GM12878 (cell line): ENCODE measurements at regions of chr15 and their contacts with region 1.

Region 1: GRCh38 chr15:48358229-48358641 is 27.0 kb downstream of the DUT start:
- DNase-seq: no peak
- ATAC-seq: peak; percentile 70
- H3K4me3 ChIP-seq: peak overlapping the region; percentile 22
- H3K27ac ChIP-seq: peak overlapping the region; percentile 53
- H3K4me1 ChIP-seq: peaks cover 10% of the 10 kb centered on the region
- H3K27me3 ChIP-seq: no peaks in the 10 kb centered on the region
- CTCF ChIP-seq: peak; percentile 44 to 73 (median 64); a peak in 5 of 6 replicates
- EP300 ChIP-seq: no peak
- POLR2A ChIP-seq: no peak
- RAD21 ChIP-seq: peak; percentile 78

Region 2: GRCh38 chr15:47961401-47962090 is 396.7 kb before region 1 on chr15:
- CTCF ChIA-PET with region 1: no interaction called
- POLR2A ChIA-PET with region 1: no interaction called
- RAD21 ChIA-PET with region 1: no interaction called
- SMC1A ChIA-PET with region 1: no interaction called
- in situ Hi-C with region 1: no loop called
- intact Hi-C with region 1: no loop called
- DNase-seq: peak; percentile 80
- ATAC-seq: peak; percentile 95
- H3K4me3 ChIP-seq: peak overlapping the region; percentile 58
- H3K27ac ChIP-seq: peak overlapping the region; percentile 51
- H3K4me1 ChIP-seq: peaks cover 21% of the 10 kb centered on the region
- H3K27me3 ChIP-seq: no peaks in the 10 kb centered on the region
- CTCF ChIP-seq: no peak
- EP300 ChIP-seq: peak; percentile 60 to 63; a peak in 2 of 4 replicates
- POLR2A ChIP-seq: no peak
- RAD21 ChIP-seq: no peak

Region 3: DNA sequence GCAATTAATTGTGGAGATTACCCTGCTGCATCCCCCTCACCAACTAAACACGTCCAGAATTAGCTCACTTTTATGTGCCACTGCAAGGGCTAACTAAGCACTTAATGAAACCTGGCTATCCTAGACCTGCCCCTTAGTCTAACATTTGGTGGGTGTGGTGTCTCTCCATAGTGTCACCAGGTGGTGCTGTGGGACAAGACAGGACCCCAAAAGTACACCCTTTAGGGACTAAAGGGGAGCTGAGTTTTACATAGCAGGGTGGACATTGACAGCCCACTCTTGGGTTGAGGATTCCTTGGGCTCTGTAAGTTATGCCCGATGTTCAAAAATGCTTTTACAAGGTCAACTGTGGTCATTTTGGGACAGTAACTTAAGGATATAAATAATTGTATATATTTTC is 21.3 kb before region 1 on chr15:
- CTCF ChIA-PET with region 1: interaction called, 123 read pairs
- POLR2A ChIA-PET with region 1: no interaction called
- RAD21 ChIA-PET with region 1: interaction called, 23 read pairs
- SMC1A ChIA-PET with region 1: interaction called, 43 read pairs
- in situ Hi-C with region 1: no loop called
- intact Hi-C with region 1: loop called (anchors 2 kb)
- DNase-seq: no peak
- ATAC-seq: peak; percentile 68
- H3K4me3 ChIP-seq: no peak overlapping the region
- H3K27ac ChIP-seq: no peak overlapping the region
- H3K4me1 ChIP-seq: peaks cover 3% of the 10 kb centered on the region; the same call in 1 of the 2 replicates
- H3K27me3 ChIP-seq: no peaks in the 10 kb centered on the region
- CTCF ChIP-seq: peak; percentile 50 to 62 (median 60); a peak in 4 of 6 replicates
- EP300 ChIP-seq: no peak
- POLR2A ChIP-seq: no peak
- RAD21 ChIP-seq: peak; percentile 50; the same call in 1 of the 2 replicates

Region 4: DNA sequence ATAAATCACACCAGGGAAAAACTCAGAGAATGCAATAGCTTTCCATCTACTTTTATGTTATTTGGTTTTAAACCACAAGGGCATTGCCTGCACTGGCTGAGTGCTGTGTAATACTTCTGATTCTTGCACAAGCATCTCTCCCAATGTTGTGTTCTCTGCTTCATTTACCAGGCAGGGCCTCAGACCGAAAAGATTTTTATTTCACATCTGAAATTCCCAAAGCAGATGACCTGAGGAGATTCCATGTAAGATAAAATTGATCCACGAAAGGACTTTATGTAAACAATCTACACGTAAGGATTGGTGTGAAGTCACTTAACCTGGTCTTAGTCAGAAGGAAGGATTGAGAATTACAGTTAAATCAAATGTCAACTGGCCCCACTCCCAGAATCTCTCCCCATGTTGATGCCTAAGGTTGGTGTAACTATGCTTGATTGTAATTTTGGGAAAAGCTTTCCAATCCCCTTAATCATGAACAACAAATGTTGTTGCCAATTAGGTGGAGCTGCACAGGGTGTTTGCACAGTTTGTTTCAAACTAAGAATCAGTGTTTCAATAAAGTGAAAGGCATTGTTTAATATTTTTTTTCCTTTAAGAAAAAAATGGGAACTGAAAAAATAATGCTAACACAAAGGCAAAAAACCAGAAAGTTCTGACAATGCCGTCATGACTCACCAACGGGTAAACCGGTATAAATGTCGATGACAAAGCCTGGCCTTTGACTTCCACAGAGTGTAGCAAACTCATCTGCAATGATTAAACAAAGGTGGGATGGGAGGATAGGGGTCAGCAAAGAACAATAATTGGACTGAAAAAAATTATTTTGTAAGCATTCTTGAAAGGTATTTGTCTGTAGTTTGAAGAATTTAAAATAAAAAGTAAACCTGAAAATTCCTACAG is 101.6 kb after region 1 on chr15:
- CTCF ChIA-PET with region 1: interaction called, 10 read pairs
- POLR2A ChIA-PET with region 1: no interaction called
- RAD21 ChIA-PET with region 1: interaction called, 3 read pairs
- SMC1A ChIA-PET with region 1: no interaction called
- in situ Hi-C with region 1: no loop called
- intact Hi-C with region 1: no loop called
- DNase-seq: no peak
- ATAC-seq: no peak
- H3K4me3 ChIP-seq: no peak overlapping the region
- H3K27ac ChIP-seq: no peak overlapping the region
- H3K4me1 ChIP-seq: no peaks in the 10 kb centered on the region
- H3K27me3 ChIP-seq: no peaks in the 10 kb centered on the region
- CTCF ChIP-seq: no peak
- EP300 ChIP-seq: no peak
- POLR2A ChIP-seq: no peak
- RAD21 ChIP-seq: no peak

Region 5: GRCh38 chr15:48810414-48811317 is 452.4 kb after region 1 on chr15 and contains the start of gene CEP152:
- CTCF ChIA-PET with region 1: interaction called, 13 read pairs
- POLR2A ChIA-PET with region 1: no interaction called
- RAD21 ChIA-PET with region 1: interaction called, 10 read pairs
- SMC1A ChIA-PET with region 1: interaction called, 11 read pairs
- in situ Hi-C with region 1: no loop called
- intact Hi-C with region 1: loop called (anchors 5 kb)
- DNase-seq: peak; percentile 98
- ATAC-seq: peak; percentile 94
- H3K4me3 ChIP-seq: peak within 1 kb of the TSS; percentile 79
- H3K27ac ChIP-seq: peak within 1 kb of the TSS; percentile 73
- H3K4me1 ChIP-seq: 0 out of 2 replicates have a peak, but pooled peaks cover 2% of the 10 kb centered on the region
- H3K27me3 ChIP-seq: no peaks in the 10 kb centered on the region; a peak in 1 of 4 replicates
- CTCF ChIP-seq: no peak
- EP300 ChIP-seq: no peak
- POLR2A ChIP-seq: peak; percentile 87
- RAD21 ChIP-seq: no peak
- polyA plus RNA-seq, gene CEP152: 5.3 to 5.7 TPM

Region 6: DNA sequence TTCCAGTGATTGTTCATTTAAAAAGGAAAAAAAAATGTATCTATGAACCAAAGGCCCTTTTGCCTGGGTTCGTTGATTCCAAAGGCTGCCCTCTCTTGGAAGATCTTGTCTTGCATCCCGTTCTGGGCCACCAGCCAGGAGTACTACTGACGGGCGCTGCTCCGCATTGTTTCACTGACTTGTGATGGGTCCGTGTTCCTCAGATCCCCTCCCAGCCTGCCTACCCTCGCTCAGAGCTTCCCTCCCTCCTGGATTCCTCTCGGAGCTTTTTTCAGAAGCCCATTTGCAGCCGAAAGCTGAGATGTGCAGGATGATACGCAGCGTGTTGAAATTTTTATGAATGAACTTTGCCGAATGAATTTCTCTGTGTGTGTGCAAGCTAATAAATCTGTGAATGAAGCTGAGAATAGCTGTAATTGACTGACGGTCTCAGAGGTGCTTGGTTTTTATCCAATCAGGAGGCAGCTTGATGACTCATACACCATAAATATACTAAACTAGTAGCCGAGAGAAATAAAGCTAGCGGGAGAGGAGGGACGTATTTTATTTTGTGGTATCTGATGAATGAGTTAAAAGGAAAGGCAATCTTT is 605.4 kb after region 1 on chr15 and contains the start of gene SHC4:
- CTCF ChIA-PET with region 1: interaction called, 12 read pairs
- POLR2A ChIA-PET with region 1: no interaction called
- RAD21 ChIA-PET with region 1: no interaction called
- SMC1A ChIA-PET with region 1: interaction called, 4 read pairs
- in situ Hi-C with region 1: no loop called
- intact Hi-C with region 1: no loop called
- DNase-seq: no peak
- ATAC-seq: peak; percentile 34
- H3K4me3 ChIP-seq: peak within 1 kb of the TSS; percentile 54
- H3K27ac ChIP-seq: no peak within 1 kb of the TSS
- H3K4me1 ChIP-seq: no peaks in the 10 kb centered on the region; the same call in 1 of the 2 replicates
- H3K27me3 ChIP-seq: peaks cover 0 to 11% of the 10 kb centered on the region in 2 experiments; a peak in 2 of 4 replicates
- CTCF ChIP-seq: 0 out of 6 replicates have a peak, but pooled peaks of 1 of the 3 experiments have one; percentile 5
- EP300 ChIP-seq: no peak
- POLR2A ChIP-seq: no peak
- RAD21 ChIP-seq: no peak
- polyA plus RNA-seq, gene SHC4: 0.04 to 0.08 TPM

Region 7: DNA sequence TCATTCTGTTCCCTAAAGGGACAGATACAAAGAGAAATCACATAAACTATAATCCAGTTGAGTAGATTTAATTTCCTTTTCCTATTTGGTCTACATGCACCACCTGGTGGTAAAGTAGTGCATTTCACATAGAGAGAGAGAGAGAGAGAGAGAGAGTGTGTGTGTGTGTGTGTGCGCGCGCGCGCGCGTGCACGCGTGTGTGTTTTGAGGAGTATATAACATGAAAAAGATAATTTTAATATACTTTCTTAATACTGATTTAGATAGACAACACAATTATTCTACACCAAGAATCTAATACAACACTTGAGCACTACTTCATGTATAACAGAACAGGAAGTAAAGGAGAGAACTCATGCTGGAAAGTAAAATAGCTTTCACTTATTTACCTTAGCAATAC is 1063.8 kb after region 1 on chr15:
- CTCF ChIA-PET with region 1: interaction called, 6 read pairs
- POLR2A ChIA-PET with region 1: no interaction called
- RAD21 ChIA-PET with region 1: interaction called, 3 read pairs
- SMC1A ChIA-PET with region 1: interaction called, 10 read pairs
- in situ Hi-C with region 1: no loop called
- intact Hi-C with region 1: loop called (anchors 10 kb)
- DNase-seq: peak; percentile 12
- ATAC-seq: peak; percentile 72
- H3K4me3 ChIP-seq: no peak overlapping the region
- H3K27ac ChIP-seq: no peak overlapping the region
- H3K4me1 ChIP-seq: no peaks in the 10 kb centered on the region
- H3K27me3 ChIP-seq: no peaks in the 10 kb centered on the region
- CTCF ChIP-seq: peak; percentile 57 to 78 (median 66)
- EP300 ChIP-seq: no peak
- POLR2A ChIP-seq: no peak
- RAD21 ChIP-seq: peak; percentile 80